ENCODE measurements at regions of chr7 and their contacts with region 1.

Region 1: GRCh38 chr7:133794479-133794878 is 332.7 kb upstream of the LRGUK start:
- DNase-seq: no peak
- H3K4me3 ChIP-seq: no peak overlapping the region
- H3K27ac ChIP-seq: peak overlapping the region in 1 of 2 experiments; percentile 100; a peak in 2 of 4 replicates
- H3K4me1 ChIP-seq: peaks cover 11 to 49% of the 10 kb centered on the region in 2 experiments; a peak in 3 of 4 replicates
- H3K27me3 ChIP-seq: no peaks in the 10 kb centered on the region
- CTCF ChIP-seq: no peak
- EP300 ChIP-seq: peak in 1 of 2 experiments; percentile 40; a peak in 1 of 4 replicates
- RAD21 ChIP-seq: no peak

Region 2: GRCh38 chr7:133730360-133730759 is 64.1 kb before region 1 on chr7:
- CTCF ChIA-PET with region 1: no interaction called
- POLR2A ChIA-PET with region 1: no interaction called
- DNase-seq: no peak
- H3K4me3 ChIP-seq: no peak overlapping the region
- H3K27ac ChIP-seq: peak overlapping the region in 1 of 2 experiments; percentile 93; a peak in 2 of 4 replicates
- H3K4me1 ChIP-seq: peaks cover 0 to 13% of the 10 kb centered on the region in 2 experiments; a peak in 2 of 4 replicates
- H3K27me3 ChIP-seq: no peaks in the 10 kb centered on the region
- CTCF ChIP-seq: no peak
- EP300 ChIP-seq: peak in 1 of 2 experiments; percentile 55; a peak in 1 of 4 replicates
- RAD21 ChIP-seq: no peak; the same call in 1 of the 2 replicates

Region 3: DNA sequence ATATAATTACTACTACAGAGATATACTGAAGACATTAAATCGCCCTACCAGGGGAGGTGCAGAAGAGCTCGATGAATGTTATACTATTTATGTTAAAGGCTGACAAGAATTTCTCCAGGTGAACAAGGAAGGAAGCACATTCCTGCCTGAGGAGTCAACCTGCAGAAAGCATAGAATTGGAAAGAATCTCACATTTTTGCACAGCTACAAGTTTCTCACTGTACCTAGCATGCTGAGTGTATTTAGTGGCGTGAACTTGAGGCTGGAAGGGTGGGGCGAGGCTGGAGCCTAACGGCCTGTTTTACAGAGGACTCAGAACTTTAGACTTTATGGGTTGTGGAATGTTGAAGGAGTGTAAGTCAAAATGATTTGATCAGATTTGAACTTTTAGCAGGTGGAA is 41.0 kb before region 1 on chr7:
- CTCF ChIA-PET with region 1: interaction called, 50 read pairs
- POLR2A ChIA-PET with region 1: interaction called, 7 read pairs
- DNase-seq: no peak
- H3K4me3 ChIP-seq: no peak overlapping the region
- H3K27ac ChIP-seq: peak overlapping the region in 1 of 2 experiments; percentile 100; a peak in 2 of 4 replicates
- H3K4me1 ChIP-seq: peaks cover 0 to 24% of the 10 kb centered on the region in 2 experiments; a peak in 2 of 4 replicates
- H3K27me3 ChIP-seq: no peaks in the 10 kb centered on the region
- CTCF ChIP-seq: no peak
- EP300 ChIP-seq: no peak
- RAD21 ChIP-seq: no peak

Region 4: GRCh38 chr7:133778472-133778871 is 16.0 kb before region 1 on chr7:
- CTCF ChIA-PET with region 1: interaction called, 51 read pairs
- POLR2A ChIA-PET with region 1: interaction called, 10 read pairs
- DNase-seq: no peak
- H3K4me3 ChIP-seq: no peak overlapping the region
- H3K27ac ChIP-seq: peak overlapping the region in 1 of 2 experiments; percentile 100; a peak in 2 of 4 replicates
- H3K4me1 ChIP-seq: peaks cover 0 to 58% of the 10 kb centered on the region in 2 experiments; a peak in 2 of 4 replicates
- H3K27me3 ChIP-seq: no peaks in the 10 kb centered on the region
- CTCF ChIP-seq: no peak
- EP300 ChIP-seq: no peak
- RAD21 ChIP-seq: no peak

Region 5: GRCh38 chr7:133827707-133828623 is 33.5 kb after region 1 on chr7:
- CTCF ChIA-PET with region 1: interaction called, 23 read pairs
- POLR2A ChIA-PET with region 1: no interaction called
- DNase-seq: no peak
- H3K4me3 ChIP-seq: no peak overlapping the region
- H3K27ac ChIP-seq: peak overlapping the region in 1 of 2 experiments; percentile 80; a peak in 2 of 4 replicates
- H3K4me1 ChIP-seq: peaks cover 0 to 34% of the 10 kb centered on the region in 2 experiments; a peak in 3 of 4 replicates
- H3K27me3 ChIP-seq: no peaks in the 10 kb centered on the region
- CTCF ChIP-seq: no peak
- EP300 ChIP-seq: no peak
- RAD21 ChIP-seq: no peak

Region 6: GRCh38 chr7:133846203-133846945 is 51.9 kb after region 1 on chr7:
- CTCF ChIA-PET with region 1: interaction called, 11 read pairs
- POLR2A ChIA-PET with region 1: interaction called, 6 read pairs
- DNase-seq: peak; percentile 67
- H3K4me3 ChIP-seq: no peak overlapping the region
- H3K27ac ChIP-seq: peak overlapping the region in 1 of 2 experiments; percentile 99; a peak in 2 of 4 replicates
- H3K4me1 ChIP-seq: peaks cover 5 to 27% of the 10 kb centered on the region in 2 experiments
- H3K27me3 ChIP-seq: no peaks in the 10 kb centered on the region
- CTCF ChIP-seq: no peak
- EP300 ChIP-seq: peak in 1 of 2 experiments; percentile 94; a peak in 2 of 4 replicates
- RAD21 ChIP-seq: peak; percentile 37; the same call in 1 of the 2 replicates

Region 7: DNA sequence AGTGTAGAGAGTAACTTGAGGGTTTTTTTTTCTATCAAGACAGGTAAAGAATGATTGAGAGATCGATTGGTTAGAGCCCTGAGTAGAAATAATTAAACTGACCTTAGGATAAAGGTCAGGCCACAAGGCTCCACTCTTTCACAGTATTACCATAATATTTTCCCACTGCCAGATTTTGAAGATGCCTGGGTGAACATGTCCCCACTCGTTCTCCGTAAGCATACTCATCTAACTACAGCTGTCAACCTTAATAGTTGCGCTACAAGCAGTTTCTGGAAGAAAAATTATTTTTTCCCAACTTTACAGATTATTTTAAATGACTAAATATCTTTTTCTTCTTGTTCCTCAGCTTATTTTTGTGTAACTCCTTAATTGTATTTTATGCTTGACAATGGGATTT is 129.5 kb after region 1 on chr7:
- CTCF ChIA-PET with region 1: no interaction called
- POLR2A ChIA-PET with region 1: no interaction called
- DNase-seq: no peak
- H3K4me3 ChIP-seq: no peak overlapping the region
- H3K27ac ChIP-seq: no peak overlapping the region
- H3K4me1 ChIP-seq: peaks cover 0 to 9% of the 10 kb centered on the region in 2 experiments; a peak in 2 of 4 replicates
- H3K27me3 ChIP-seq: no peaks in the 10 kb centered on the region
- CTCF ChIP-seq: no peak
- EP300 ChIP-seq: no peak
- RAD21 ChIP-seq: no peak

Region 8: GRCh38 chr7:134140889-134141867 is 346.7 kb after region 1 on chr7:
- CTCF ChIA-PET with region 1: interaction called, 12 read pairs
- POLR2A ChIA-PET with region 1: no interaction called
- DNase-seq: peak; percentile 86
- H3K4me3 ChIP-seq: no peak overlapping the region
- H3K27ac ChIP-seq: peak overlapping the region in 1 of 2 experiments; percentile 63; a peak in 2 of 4 replicates
- H3K4me1 ChIP-seq: peaks cover 0 to 20% of the 10 kb centered on the region in 2 experiments; a peak in 2 of 4 replicates
- H3K27me3 ChIP-seq: no peaks in the 10 kb centered on the region
- CTCF ChIP-seq: peak; percentile 98
- EP300 ChIP-seq: peak in 1 of 2 experiments; percentile 49; a peak in 1 of 4 replicates
- RAD21 ChIP-seq: peak; percentile 98

Measured in SK-N-SH (cell line).